Posterior cingulate gyrus (tissue), 11 donors: ENCODE measurements at regions of chr2 and their contacts with region 1.

Region 1: GRCh38 chr2:82143343-82143742 is 1838.8 kb upstream of the LRRTM1 start:
- DNase-seq: no peak

Region 2: GRCh38 chr2:81991282-81991681 is 152.1 kb before region 1 on chr2:
- intact Hi-C with region 1: no loop called
- DNase-seq: no peak

Region 3: GRCh38 chr2:82084679-82085392 is 58.5 kb before region 1 on chr2:
- intact Hi-C with region 1: no loop called
- DNase-seq: no peak

Region 4: GRCh38 chr2:82098617-82099016 is 44.7 kb before region 1 on chr2:
- intact Hi-C with region 1: loop called (anchors 2 kb)
- DNase-seq: peak in 1 of 10 donors; percentile 12

Region 5: GRCh38 chr2:82307510-82307909 is 164.2 kb after region 1 on chr2:
- intact Hi-C with region 1: no loop called
- DNase-seq: no peak